Activated CD4-positive, alpha-beta memory T cell treated with anti-CD3 and anti-CD28 coated beads for 36 hours (primary cell): ENCODE measurements at regions of chr1 and their contacts with region 1.

Region 1: DNA sequence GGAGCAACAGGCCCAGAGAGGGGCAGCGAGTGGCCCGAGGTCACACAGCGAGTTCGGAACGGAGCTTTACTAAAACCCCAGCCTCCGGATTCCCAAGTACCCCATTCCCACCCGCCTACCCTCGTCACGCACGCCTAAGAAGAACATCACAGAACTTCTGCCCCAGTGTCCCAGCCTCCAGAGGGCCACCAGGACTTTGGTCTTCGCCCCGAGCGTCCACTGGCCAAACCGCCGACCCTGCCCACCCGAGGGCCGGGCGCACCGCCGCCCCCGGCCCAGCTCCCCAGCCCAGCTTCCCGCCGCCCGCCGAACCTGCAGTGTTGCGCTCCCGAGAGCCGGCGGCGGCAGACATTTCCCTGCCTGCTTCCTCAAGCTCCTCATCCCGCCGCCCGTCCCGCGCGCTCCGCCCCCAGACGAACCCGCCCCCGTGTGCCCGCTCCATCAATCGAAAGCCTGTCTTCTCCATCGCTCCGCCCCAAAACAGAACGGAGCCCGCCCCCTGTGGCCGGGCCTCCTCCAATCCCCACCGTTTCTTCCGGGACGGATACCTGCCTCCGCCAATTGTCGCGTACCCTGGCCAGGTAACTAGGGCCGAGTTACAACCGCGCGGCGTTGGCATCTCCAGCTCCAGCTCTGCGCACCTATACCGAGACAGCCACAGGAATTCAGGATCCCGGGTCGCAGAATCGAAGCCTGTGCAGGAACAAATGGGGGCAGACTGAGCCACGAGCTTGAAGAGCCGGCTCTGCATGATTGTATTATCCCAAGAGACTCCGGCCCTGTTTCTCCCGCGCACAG is 15.3 kb downstream of the INPP5B start:
- DNase-seq: peak; percentile 99
- H3K4me3 Mint-ChIP-seq: peak overlapping the region; percentile 91
- H3K27ac Mint-ChIP-seq: peak overlapping the region; percentile 68
- H3K4me1 Mint-ChIP-seq: peaks cover 33% of the 10 kb centered on the region
- H3K27me3 Mint-ChIP-seq: no peaks in the 10 kb centered on the region

Region 2: GRCh38 chr1:37978541-37978940 is 47.0 kb after region 1 on chr1:
- CTCF ChIA-PET with region 1: no interaction called
- POLR2A ChIA-PET with region 1: no interaction called
- intact Hi-C with region 1: loop called (anchors 5 kb)
- DNase-seq: no peak
- H3K4me3 Mint-ChIP-seq: no peak overlapping the region
- H3K27ac Mint-ChIP-seq: no peak overlapping the region
- H3K4me1 Mint-ChIP-seq: no peaks in the 10 kb centered on the region
- H3K27me3 Mint-ChIP-seq: no peaks in the 10 kb centered on the region